ENCODE measurements at regions of chr16 and their contacts with region 1.

Region 1: GRCh38 chr16:81723098-81723723 is 55.9 kb upstream of the PLCG2 start:
- DNase-seq: no peak
- ATAC-seq: peak; percentile 95 to 98 (median 96)
- H3K4me3 ChIP-seq: no peak overlapping the region
- H3K27ac ChIP-seq: no peak overlapping the region
- H3K4me1 ChIP-seq: no peaks in the 10 kb centered on the region
- H3K27me3 ChIP-seq: no peaks in the 10 kb centered on the region
- CTCF ChIP-seq: peak; percentile 71 to 84 (median 73)
- POLR2A ChIP-seq: no peak

Region 2: DNA sequence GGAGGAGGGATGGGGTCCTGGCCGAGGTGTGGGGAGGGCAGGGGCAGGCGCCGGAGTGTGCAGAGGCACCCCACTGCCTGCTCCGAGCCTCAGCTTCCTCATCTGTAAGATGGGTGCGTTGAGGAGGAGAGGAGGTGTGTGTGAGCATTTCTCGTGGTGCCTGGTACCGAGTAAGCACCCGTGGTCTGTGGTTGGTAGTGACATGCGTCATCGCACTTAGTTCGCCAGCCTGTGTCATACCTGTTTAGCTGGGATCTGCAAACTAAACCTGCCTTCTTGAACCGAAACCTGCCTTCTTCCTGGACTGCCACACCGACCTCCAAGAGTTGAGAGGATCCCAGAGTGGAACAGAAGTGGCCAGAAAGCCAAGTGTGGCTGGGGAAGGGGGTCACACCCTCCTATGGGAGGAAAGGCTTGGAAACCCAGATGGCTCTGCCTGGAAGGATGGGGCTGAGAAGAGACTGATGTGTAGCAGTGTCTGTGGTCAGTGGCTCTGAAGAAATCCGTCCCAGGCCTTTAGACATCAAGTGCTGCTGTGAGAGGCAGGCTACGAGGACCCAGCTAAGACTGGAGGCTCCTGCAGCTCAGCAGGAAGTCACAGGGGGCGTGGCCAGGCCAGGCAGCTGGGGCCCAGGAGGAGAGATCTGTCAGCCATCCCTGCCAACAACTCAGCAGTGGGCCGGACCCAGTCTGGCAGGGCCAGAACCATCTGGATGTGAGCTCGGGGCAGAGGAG is 106.7 kb before region 1 on chr16:
- intact Hi-C with region 1: loop called in 1 of 2 experiments (anchors 5 kb)
- DNase-seq: peak in 2 of 3 donors; percentile 68 to 72
- ATAC-seq: peak; percentile 32 to 56 (median 48)
- H3K4me3 ChIP-seq: no peak overlapping the region
- H3K27ac ChIP-seq: peak overlapping the region in 2 of 3 donors; percentile 5 to 24
- H3K4me1 ChIP-seq: no peaks in the 10 kb centered on the region
- H3K27me3 ChIP-seq: no peaks in the 10 kb centered on the region
- CTCF ChIP-seq: no peak
- POLR2A ChIP-seq: no peak

Region 3: GRCh38 chr16:81863630-81864352 is 140.6 kb after region 1 on chr16:
- intact Hi-C with region 1: no loop called
- DNase-seq: no peak
- ATAC-seq: no peak
- H3K4me3 ChIP-seq: no peak overlapping the region
- H3K27ac ChIP-seq: no peak overlapping the region
- H3K4me1 ChIP-seq: no peaks in the 10 kb centered on the region
- H3K27me3 ChIP-seq: no peaks in the 10 kb centered on the region
- CTCF ChIP-seq: no peak
- POLR2A ChIP-seq: no peak

Measured in right lobe of liver (tissue), 6 donors.